CD8-positive, alpha-beta T cell (primary cell): ENCODE measurements at regions of chr17 and their contacts with region 1.

Region 1: GRCh38 chr17:62870030-62870541 is 62.0 kb upstream of the MARCHF10 start:
- DNase-seq: no peak
- ATAC-seq: no peak
- H3K4me3 ChIP-seq: no peak overlapping the region
- H3K4me3 Mint-ChIP-seq: no peak overlapping the region
- H3K27ac ChIP-seq: no peak overlapping the region
- H3K27ac Mint-ChIP-seq: no peak overlapping the region
- H3K4me1 ChIP-seq: no peaks in the 10 kb centered on the region
- H3K4me1 Mint-ChIP-seq: no peaks in the 10 kb centered on the region
- H3K27me3 ChIP-seq: no peaks in the 10 kb centered on the region
- H3K27me3 Mint-ChIP-seq: peaks cover 23% of the 10 kb centered on the region
- CTCF ChIP-seq: no peak

Region 2: GRCh38 chr17:62827746-62828616 is 42.1 kb before region 1 on chr17:
- CTCF ChIA-PET with region 1: no interaction called
- POLR2A ChIA-PET with region 1: no interaction called
- intact Hi-C with region 1: no loop called
- DNase-seq: no peak
- ATAC-seq: no peak
- H3K4me3 ChIP-seq: no peak overlapping the region
- H3K4me3 Mint-ChIP-seq: no peak overlapping the region
- H3K27ac ChIP-seq: no peak overlapping the region
- H3K27ac Mint-ChIP-seq: no peak overlapping the region
- H3K4me1 ChIP-seq: no peaks in the 10 kb centered on the region
- H3K4me1 Mint-ChIP-seq: no peaks in the 10 kb centered on the region
- H3K27me3 ChIP-seq: no peaks in the 10 kb centered on the region
- H3K27me3 Mint-ChIP-seq: no peaks in the 10 kb centered on the region
- CTCF ChIP-seq: no peak

Region 3: GRCh38 chr17:62898220-62898864 is 28.3 kb after region 1 on chr17:
- CTCF ChIA-PET with region 1: no interaction called
- POLR2A ChIA-PET with region 1: no interaction called
- intact Hi-C with region 1: loop called in 1 of 2 experiments (anchors 1 kb)
- DNase-seq: no peak
- ATAC-seq: no peak
- H3K4me3 ChIP-seq: no peak overlapping the region
- H3K4me3 Mint-ChIP-seq: no peak overlapping the region
- H3K27ac ChIP-seq: no peak overlapping the region
- H3K27ac Mint-ChIP-seq: no peak overlapping the region
- H3K4me1 ChIP-seq: no peaks in the 10 kb centered on the region
- H3K4me1 Mint-ChIP-seq: no peaks in the 10 kb centered on the region
- H3K27me3 ChIP-seq: no peaks in the 10 kb centered on the region
- H3K27me3 Mint-ChIP-seq: peaks cover 7% of the 10 kb centered on the region
- CTCF ChIP-seq: no peak

Region 4: GRCh38 chr17:63039899-63040641 is 170.0 kb after region 1 on chr17:
- CTCF ChIA-PET with region 1: no interaction called
- POLR2A ChIA-PET with region 1: no interaction called
- intact Hi-C with region 1: no loop called
- DNase-seq: no peak
- ATAC-seq: no peak
- H3K4me3 ChIP-seq: no peak overlapping the region
- H3K4me3 Mint-ChIP-seq: no peak overlapping the region
- H3K27ac ChIP-seq: no peak overlapping the region
- H3K27ac Mint-ChIP-seq: no peak overlapping the region
- H3K4me1 ChIP-seq: no peaks in the 10 kb centered on the region
- H3K4me1 Mint-ChIP-seq: peaks cover 16% of the 10 kb centered on the region
- H3K27me3 ChIP-seq: no peaks in the 10 kb centered on the region
- H3K27me3 Mint-ChIP-seq: no peaks in the 10 kb centered on the region
- CTCF ChIP-seq: no peak